Activated T-helper 1 cell treated with anti-CD3 and anti-CD28 coated beads, Interleukin-12 subunit alpha, Interleukin-12 subunit beta, Interleukin-2, Interleukin-4 antibody, amounts not matched to agents 30 ng/mL and 10 ng/mL and 1 ng/mL, durations not matched to agents 14 hours and 24 hours and 36 hours (primary cell): ENCODE measurements at regions of chr12 and their contacts with region 1.

Region 1: DNA sequence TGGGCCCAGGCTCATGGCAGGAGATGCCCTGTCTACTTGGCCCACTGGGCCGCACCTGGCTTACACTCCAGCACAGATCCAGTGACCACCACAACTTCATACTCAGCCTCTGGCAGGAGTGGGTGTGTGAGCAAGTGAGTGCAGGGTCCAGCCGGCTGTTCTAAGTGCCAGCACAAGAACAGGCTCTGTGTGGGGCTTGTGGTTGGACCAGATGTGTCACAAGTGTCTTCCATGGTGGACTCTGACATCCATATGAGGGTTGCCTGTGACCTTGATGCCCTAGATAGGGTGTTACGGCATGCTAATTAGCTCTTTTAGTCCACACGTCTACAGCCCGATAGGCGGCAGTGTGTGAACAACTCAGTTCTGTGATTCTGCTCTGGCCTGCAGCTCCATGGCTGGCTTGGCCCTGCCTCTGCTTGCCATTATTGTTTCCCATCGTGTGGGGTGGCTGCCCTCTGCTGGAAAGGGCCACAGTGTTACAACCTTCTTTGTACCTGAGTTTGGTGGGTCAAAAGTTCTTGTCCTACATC is 1089.1 kb downstream of the SLC6A15 start:
- DNase-seq: no peak
- H3K4me3 Mint-ChIP-seq: no peak overlapping the region
- H3K27ac Mint-ChIP-seq: no peak overlapping the region
- H3K4me1 Mint-ChIP-seq: no peaks in the 10 kb centered on the region
- H3K27me3 Mint-ChIP-seq: no peaks in the 10 kb centered on the region

Region 2: GRCh38 chr12:82527165-82527780 is 1296.2 kb before region 1 on chr12:
- intact Hi-C with region 1: loop called (anchors 2 kb)
- DNase-seq: no peak
- H3K4me3 Mint-ChIP-seq: no peak overlapping the region
- H3K27ac Mint-ChIP-seq: no peak overlapping the region
- H3K4me1 Mint-ChIP-seq: no peaks in the 10 kb centered on the region
- H3K27me3 Mint-ChIP-seq: peaks cover 5% of the 10 kb centered on the region

Region 3: GRCh38 chr12:83005534-83006197 is 817.8 kb before region 1 on chr12:
- intact Hi-C with region 1: loop called (anchors 2 kb)
- DNase-seq: no peak
- H3K4me3 Mint-ChIP-seq: no peak overlapping the region
- H3K27ac Mint-ChIP-seq: no peak overlapping the region
- H3K4me1 Mint-ChIP-seq: no peaks in the 10 kb centered on the region
- H3K27me3 Mint-ChIP-seq: no peaks in the 10 kb centered on the region

Region 4: DNA sequence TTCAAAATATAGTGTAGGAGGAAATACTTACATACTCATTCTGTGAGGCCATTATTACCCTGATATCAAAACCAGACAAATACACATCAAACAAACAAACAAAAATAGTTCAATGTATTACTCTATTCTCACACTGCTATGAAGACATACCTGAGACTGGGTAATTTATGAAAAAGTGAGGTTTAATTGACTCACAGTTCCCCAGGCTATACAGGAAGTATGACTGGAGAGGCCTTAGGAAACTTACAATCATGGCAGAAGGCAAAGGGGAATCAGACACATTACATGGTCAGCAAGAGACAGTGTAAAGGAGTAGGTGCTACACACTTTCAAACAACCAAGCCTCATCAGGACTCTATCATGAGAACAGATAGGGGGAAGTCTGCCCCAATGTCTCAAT is 113.6 kb before region 1 on chr12:
- intact Hi-C with region 1: no loop called
- DNase-seq: no peak
- H3K4me3 Mint-ChIP-seq: no peak overlapping the region
- H3K27ac Mint-ChIP-seq: no peak overlapping the region
- H3K4me1 Mint-ChIP-seq: no peaks in the 10 kb centered on the region
- H3K27me3 Mint-ChIP-seq: no peaks in the 10 kb centered on the region

Region 5: DNA sequence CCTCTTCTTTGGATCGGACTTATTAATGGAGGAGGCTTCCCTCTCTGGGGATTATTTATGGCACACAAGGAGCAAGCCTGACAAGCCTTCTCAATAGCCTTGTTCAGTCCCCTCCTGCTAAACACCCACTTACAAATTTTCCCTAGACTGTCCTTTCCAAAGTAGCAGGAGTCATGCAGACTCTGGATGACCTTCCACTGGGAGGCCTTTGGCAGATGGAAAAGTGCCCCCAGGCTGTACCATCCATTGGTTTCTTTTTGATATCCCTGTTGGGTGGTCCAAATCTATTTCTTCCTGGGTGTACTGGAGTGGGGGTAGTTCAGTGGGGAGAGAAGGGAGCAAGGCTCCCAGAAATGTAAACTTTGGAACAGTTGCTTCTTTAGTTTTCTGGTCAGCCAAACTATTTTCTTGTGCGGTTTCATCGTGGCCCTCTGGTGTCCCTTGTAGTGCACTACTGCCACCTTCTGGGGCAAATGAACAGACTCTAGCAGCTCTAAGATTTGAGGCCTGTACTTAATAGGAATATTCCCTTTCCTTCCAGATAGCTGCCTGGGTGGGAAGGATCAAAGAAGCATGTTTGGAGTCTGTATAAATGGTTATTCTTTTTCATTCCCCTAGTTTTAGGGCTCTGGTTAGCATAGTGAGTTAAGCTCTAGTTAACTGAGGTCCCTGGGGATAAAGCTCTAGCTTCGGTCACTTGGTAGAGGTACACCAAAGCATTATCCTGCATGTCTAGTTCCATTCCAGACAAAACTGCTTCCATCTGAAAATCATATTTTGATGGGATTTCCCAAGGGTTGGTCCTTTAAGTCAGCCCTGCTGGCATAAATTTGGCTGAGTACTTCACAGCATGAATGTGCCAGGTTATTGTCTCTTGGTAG is 679.6 kb after region 1 on chr12:
- intact Hi-C with region 1: loop called (anchors 10 kb)
- DNase-seq: no peak
- H3K4me3 Mint-ChIP-seq: no peak overlapping the region
- H3K27ac Mint-ChIP-seq: no peak overlapping the region
- H3K4me1 Mint-ChIP-seq: no peaks in the 10 kb centered on the region
- H3K27me3 Mint-ChIP-seq: no peaks in the 10 kb centered on the region

Region 6: DNA sequence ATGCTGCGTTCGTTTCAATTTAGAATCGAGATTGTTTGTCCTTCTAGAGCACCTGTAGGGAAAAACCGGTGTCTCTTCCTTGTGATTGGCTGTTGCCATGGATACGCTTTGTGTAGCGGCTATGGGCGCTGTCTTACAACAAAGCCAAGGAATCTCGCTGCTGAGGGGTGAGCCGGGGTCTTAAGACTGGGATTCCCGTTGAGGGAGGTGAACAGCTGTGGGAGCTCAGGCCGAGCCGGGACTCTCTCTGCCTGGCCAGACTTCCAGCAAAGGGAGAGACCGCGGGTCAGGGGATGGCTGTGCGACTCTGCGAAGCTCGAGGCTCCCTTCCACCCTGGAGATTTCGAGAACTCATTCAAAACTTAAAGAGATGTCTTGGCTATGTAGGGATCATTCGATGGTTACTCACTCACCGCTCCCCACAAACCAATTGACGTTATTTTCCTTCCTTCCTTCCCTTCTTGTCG is 1212.8 kb after region 1 on chr12 and contains the starts of genes LRRIQ1 and TSPAN19:
- intact Hi-C with region 1: no loop called
- DNase-seq: peak; percentile 22
- H3K4me3 Mint-ChIP-seq: peak within 1 kb of the TSS; percentile 73
- H3K27ac Mint-ChIP-seq: peak within 1 kb of the TSS; percentile 40
- H3K4me1 Mint-ChIP-seq: peaks cover 6% of the 10 kb centered on the region
- H3K27me3 Mint-ChIP-seq: peaks cover 3% of the 10 kb centered on the region
- total RNA-seq, gene LRRIQ1: not detected in 2 replicates
- total RNA-seq, gene TSPAN19: not detected in 2 replicates